ENCODE measurements at regions of chr7 and their contacts with region 1.

Region 1: DNA sequence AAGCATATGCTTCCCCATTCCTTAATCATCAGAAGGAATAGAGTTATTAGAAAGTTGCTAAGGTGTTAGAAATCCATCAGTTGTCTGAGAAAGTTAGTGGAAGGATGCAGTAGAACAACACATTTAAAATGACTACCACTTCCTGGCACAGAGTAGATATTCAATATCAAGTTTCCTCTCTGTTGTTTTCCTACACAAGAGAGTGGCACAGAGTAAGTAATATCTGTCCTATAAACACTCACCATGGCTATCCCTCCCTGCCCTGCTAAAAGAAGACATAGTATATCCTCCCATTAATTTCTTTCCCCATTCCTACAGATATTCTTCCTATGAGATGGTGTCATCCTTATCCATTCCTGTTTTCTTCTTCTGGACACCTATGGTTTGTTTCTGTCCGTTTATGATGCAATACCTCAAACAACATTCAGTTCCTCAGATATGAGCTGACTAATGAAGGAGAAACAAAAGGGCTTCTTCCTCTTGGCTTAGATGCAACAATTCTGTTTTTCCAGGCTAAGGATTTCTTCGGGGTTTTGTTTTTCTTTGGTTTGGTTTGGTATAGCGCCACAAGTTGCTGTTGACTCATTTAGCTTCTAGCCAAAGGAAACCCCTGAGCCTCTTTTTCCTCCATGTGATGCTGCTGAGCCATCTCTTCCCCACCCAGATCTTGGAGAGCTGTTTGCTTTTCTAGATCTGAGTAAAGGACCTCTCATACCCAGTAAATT is 32.9 kb upstream of the BPGM start:
- DNase-seq: peak; percentile 64
- H3K4me3 Mint-ChIP-seq: no peak overlapping the region
- H3K27ac Mint-ChIP-seq: peak overlapping the region; percentile 85
- H3K4me1 Mint-ChIP-seq: peaks cover 12% of the 10 kb centered on the region
- H3K27me3 Mint-ChIP-seq: peaks cover 26% of the 10 kb centered on the region

Region 2: DNA sequence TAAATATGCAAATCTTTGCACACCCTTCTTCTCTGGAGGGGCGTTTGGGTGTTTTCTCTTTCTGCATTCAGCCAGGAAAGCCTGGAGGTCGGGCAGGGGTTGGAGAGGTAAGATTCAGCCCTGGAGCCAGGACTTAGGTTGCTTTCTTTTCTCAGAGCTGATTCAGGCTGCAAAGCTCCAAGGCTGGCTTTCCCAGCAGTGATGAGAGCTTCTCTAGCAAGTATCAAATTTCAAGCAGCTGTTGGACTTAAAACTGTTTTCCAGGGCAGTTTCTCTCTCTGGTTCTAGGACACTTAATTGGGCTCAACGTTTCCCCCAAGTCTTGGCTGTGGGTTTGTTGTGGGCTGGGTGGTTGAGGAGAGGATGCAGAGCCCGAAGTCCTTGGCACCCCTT is 85.8 kb before region 1 on chr7:
- intact Hi-C with region 1: no loop called
- DNase-seq: no peak
- H3K4me3 Mint-ChIP-seq: no peak overlapping the region
- H3K27ac Mint-ChIP-seq: no peak overlapping the region
- H3K4me1 Mint-ChIP-seq: no peaks in the 10 kb centered on the region
- H3K27me3 Mint-ChIP-seq: peaks cover 12% of the 10 kb centered on the region

Region 3: DNA sequence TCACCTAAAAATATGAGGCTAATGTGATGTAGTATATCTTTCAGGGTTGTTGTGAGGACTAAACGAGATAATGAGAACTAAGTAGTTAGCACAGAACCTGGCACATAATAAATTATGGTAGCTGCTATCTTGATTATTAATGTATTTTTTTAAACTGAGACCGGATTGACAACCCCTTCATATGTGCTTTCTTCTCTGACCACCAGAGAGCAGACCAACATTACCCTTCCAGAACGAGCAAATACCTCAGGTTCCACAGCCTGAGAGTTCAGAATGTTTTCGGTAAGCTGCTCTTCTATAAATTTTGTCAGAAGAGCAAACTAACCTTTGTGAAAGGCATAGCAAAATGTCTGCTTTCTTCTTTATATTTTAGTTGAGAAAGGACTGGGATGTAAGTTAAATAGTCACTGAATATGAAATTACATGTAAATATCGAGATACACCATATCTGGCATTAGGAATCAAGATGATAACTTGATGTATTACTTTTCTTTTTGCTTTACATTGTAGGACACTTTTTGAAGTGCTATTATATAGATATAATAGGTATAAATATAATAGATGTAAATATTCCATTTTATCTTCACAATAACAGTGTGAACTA is 19.3 kb after region 1 on chr7:
- intact Hi-C with region 1: loop called (anchors 1 kb)
- DNase-seq: peak; percentile 79
- H3K4me3 Mint-ChIP-seq: no peak overlapping the region
- H3K27ac Mint-ChIP-seq: no peak overlapping the region
- H3K4me1 Mint-ChIP-seq: peaks cover 23% of the 10 kb centered on the region
- H3K27me3 Mint-ChIP-seq: peaks cover 16% of the 10 kb centered on the region

Region 4: GRCh38 chr7:134854816-134855215 is 241.0 kb after region 1 on chr7:
- intact Hi-C with region 1: loop called (anchors 10 kb)
- DNase-seq: no peak
- H3K4me3 Mint-ChIP-seq: peak overlapping the region; percentile 30
- H3K27ac Mint-ChIP-seq: peak overlapping the region; percentile 22
- H3K4me1 Mint-ChIP-seq: peaks cover 31% of the 10 kb centered on the region
- H3K27me3 Mint-ChIP-seq: no peaks in the 10 kb centered on the region

Region 5: GRCh38 chr7:134920026-134920753 is 306.4 kb after region 1 on chr7:
- intact Hi-C with region 1: loop called (anchors 1 kb)
- DNase-seq: no peak
- H3K4me3 Mint-ChIP-seq: peak overlapping the region; percentile 16
- H3K27ac Mint-ChIP-seq: peak overlapping the region; percentile 34
- H3K4me1 Mint-ChIP-seq: peaks cover 13% of the 10 kb centered on the region
- H3K27me3 Mint-ChIP-seq: no peaks in the 10 kb centered on the region

Region 6: GRCh38 chr7:134954197-134955082 is 340.7 kb after region 1 on chr7:
- intact Hi-C with region 1: loop called (anchors 5 kb)
- DNase-seq: no peak
- H3K4me3 Mint-ChIP-seq: no peak overlapping the region
- H3K27ac Mint-ChIP-seq: no peak overlapping the region
- H3K4me1 Mint-ChIP-seq: peaks cover 4% of the 10 kb centered on the region
- H3K27me3 Mint-ChIP-seq: no peaks in the 10 kb centered on the region

Measured in activated CD4-positive, alpha-beta T cell treated with anti-CD3 and anti-CD28 coated beads, Interleukin-2, amount 10 ng/mL, durations not matched to agents 24 days and 14 days (primary cell).